Left ventricle myocardium inferior (tissue), 1 donor: ENCODE measurements at regions of chr5 and their contacts with region 1.

Region 1: GRCh38 chr5:74035521-74035981 is 409.6 kb downstream of the ARHGEF28 start:
- DNase-seq: no peak
- H3K4me3 ChIP-seq: no peak overlapping the region
- H3K27ac ChIP-seq: no peak overlapping the region
- H3K4me1 ChIP-seq: peaks cover 8% of the 10 kb centered on the region
- H3K27me3 ChIP-seq: peaks cover 14% of the 10 kb centered on the region
- CTCF ChIP-seq: peak; percentile 62

Region 2: GRCh38 chr5:74357827-74358226 is 322.3 kb after region 1 on chr5:
- intact Hi-C with region 1: no loop called
- DNase-seq: no peak
- H3K4me3 ChIP-seq: no peak overlapping the region
- H3K27ac ChIP-seq: no peak overlapping the region
- H3K4me1 ChIP-seq: peaks cover 4% of the 10 kb centered on the region
- H3K27me3 ChIP-seq: no peaks in the 10 kb centered on the region
- CTCF ChIP-seq: no peak

Region 3: GRCh38 chr5:74640450-74640953 is 605.0 kb after region 1 on chr5 and contains the start of gene ENC1:
- intact Hi-C with region 1: loop called (anchors 5 kb)
- DNase-seq: peak; percentile 89
- H3K4me3 ChIP-seq: peak within 1 kb of the TSS; percentile 89
- H3K27ac ChIP-seq: peak within 1 kb of the TSS; percentile 94
- H3K4me1 ChIP-seq: peaks cover 83% of the 10 kb centered on the region
- H3K27me3 ChIP-seq: no peaks in the 10 kb centered on the region
- CTCF ChIP-seq: peak; percentile 76
- total RNA-seq, gene ENC1: 3.8 TPM